ENCODE measurements at regions of chr9 and their contacts with region 1.

Region 1: GRCh38 chr9:109517901-109518377 is 19.8 kb upstream of the PTPN3 start:
- DNase-seq: no peak

Region 2: GRCh38 chr9:109440797-109441287 is 77.1 kb before region 1 on chr9:
- intact Hi-C with region 1: loop called (anchors 10 kb)
- DNase-seq: peak in 34 of 42 donors; percentile 13 to 79 (median 50)

Region 3: DNA sequence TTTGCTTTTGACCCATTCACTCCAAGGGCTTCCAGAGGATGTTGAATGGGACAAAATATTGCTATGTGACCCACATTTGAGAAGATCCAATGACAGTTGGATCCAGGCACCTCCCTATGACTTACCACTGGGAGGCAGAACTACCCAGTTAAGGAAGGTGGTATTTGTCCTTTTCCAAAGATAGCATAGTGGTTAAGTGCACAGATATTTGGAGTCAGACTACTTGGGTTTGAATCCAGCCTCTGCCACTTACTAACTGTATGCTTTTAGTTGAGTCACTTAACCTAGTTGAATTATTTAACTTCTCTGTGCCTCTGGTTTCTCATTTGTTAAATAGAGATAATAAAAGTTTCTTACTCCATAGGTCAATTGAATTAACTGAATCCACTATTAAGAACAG is 187.6 kb after region 1 on chr9:
- intact Hi-C with region 1: no loop called
- DNase-seq: no peak